Motor neuron (in vitro differentiated cells): ENCODE measurements at regions of chr13 and their contacts with region 1.

Region 1: GRCh38 chr13:73708393-73708985 is 425.7 kb downstream of the KLF12 start:
- ATAC-seq: peak; percentile 76 to 94 (median 88)
- H3K4me3 ChIP-seq: no peak overlapping the region
- H3K27ac ChIP-seq: no peak overlapping the region
- H3K4me1 ChIP-seq: no peaks in the 10 kb centered on the region

Region 2: GRCh38 chr13:72839831-72840426 is 868.6 kb before region 1 on chr13:
- in situ Hi-C with region 1: loop called in 1 of 9 experiments (anchors 25 kb)
- ATAC-seq: peak in 5 of 8 experiments; percentile 41 to 89 (median 80)
- H3K4me3 ChIP-seq: no peak overlapping the region
- H3K27ac ChIP-seq: no peak overlapping the region
- H3K4me1 ChIP-seq: no peaks in the 10 kb centered on the region

Region 3: GRCh38 chr13:73473016-73473415 is 235.5 kb before region 1 on chr13:
- in situ Hi-C with region 1: no loop called
- ATAC-seq: no peak
- H3K4me3 ChIP-seq: no peak overlapping the region
- H3K27ac ChIP-seq: no peak overlapping the region
- H3K4me1 ChIP-seq: no peaks in the 10 kb centered on the region